ENCODE measurements at regions of chr5 and their contacts with region 1.

Region 1: DNA sequence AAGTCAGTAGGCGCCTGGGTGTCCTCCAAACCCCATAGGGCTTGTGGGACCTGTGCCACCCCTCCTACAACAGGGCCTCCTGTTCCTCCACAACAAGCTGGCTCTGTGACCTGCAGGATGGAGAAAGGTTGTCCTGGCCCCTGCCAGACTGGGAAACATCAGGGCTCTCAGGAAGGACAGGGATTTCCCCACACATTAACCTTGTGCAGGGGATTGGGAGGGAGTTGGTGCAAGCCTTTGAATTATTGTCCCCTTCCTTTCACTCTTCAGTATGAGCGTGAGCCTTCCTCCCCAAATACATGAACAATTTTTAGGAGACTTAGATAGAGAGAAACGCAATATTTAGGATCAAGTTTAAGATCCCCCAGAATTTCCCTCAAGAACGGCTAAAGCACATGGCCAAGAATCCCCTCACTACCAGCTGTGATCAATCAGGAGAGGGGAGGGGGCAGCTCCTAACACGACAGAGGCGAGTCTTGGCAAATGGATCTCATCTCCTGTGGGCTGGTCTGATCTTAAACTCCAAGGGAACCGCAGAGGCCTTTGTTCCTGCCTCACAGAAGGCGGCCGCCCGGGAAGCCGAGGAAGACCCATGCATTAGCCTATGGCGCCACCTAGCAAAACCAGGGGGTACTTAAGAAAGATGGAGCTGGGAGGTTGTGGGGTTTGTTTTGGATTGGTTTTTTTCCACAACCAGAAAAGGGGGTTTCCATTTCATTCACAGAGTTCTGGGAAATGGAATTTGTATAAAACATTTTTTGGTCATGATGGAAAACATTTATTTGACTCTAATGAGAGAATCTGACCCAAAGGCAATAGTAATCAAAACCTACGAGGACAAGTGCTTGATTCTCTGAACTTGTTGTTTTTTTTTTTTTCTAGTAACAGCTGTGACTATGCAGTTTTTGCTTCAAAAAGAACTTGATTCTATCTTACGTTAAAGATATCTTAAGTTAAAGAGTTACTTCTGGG is 36.1 kb upstream of the OSMR start:
- DNase-seq: peak; percentile 93
- H3K4me3 ChIP-seq: no peak overlapping the region
- H3K27ac ChIP-seq: no peak overlapping the region
- H3K4me1 ChIP-seq: peaks cover 42% of the 10 kb centered on the region
- H3K27me3 ChIP-seq: no peaks in the 10 kb centered on the region

Region 2: DNA sequence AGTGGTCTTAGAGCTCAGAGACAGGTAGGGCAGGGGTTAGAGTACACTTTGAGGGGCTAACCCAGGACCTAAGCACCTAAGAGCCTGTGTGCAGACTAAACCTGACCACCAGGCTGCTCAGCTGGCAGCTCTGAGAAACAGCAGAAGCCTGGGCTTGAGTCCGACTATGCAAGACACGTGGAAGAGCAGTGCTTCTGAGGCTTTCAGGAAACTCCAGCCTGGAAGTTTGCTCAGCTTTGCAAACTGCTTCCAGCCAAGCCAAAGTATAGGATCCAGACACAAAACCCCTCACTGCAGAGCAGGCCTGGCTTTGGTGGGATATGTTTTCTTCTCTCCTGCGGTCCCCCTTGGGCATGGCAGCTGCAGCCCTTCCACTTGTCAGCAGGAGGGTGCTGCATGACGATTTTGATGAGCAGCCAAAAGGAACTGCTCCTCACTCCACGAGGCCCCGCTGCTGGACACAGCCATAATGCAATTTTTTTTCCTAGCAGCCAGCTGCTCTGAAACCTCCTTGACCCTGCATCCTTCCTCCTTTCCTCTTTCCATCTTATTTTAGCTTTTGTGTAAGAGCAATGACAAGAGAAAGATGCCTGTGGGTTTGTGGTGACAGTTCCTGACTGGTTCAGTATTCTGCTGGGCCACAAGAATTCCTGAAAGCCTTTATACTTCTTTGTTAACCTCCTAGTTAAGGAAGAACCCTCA is 376.4 kb before region 1 on chr5:
- in situ Hi-C with region 1: loop called (anchors 5 kb)
- DNase-seq: peak; percentile 71
- H3K4me3 ChIP-seq: no peak overlapping the region
- H3K27ac ChIP-seq: no peak overlapping the region
- H3K4me1 ChIP-seq: peaks cover 20% of the 10 kb centered on the region
- H3K27me3 ChIP-seq: no peaks in the 10 kb centered on the region

Region 3: DNA sequence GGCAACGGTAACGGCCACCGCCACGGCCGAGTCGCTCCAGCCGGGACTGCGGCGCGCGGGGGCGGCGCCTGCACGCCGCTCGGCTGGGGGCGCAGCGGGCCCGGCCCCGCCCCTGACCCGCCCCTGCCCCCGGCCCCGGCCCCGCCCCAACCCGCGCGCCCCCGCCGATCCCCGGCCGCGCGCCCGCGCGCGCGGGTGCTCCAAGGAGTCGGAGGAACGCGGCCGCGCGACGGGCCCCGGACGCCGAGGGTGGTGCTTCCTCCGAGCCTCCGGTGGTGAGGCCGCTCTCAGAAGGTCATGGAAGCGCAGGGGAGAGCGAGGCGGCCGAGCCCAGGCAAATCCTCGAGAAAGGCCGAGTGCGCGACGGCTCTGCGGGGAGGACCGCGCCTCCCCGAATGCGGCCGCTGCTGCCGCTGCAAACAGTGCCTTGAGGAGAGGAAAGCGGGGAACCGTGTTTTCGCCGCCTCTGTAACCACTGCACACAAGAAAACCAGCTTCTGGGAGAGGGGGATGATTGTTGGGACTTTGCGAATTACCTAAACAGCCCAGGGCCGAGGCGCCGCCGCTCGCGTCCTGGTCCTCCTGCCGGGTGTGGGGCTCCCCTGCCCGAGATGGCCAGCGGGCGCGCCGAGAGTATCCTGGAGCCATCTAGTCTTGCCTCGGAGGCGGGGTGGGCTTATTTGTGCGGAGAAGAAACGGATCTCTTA is 252.9 kb before region 1 on chr5 and contains the start of gene LIFR:
- in situ Hi-C with region 1: loop called (anchors 10 kb)
- DNase-seq: peak; percentile 87
- H3K4me3 ChIP-seq: peak within 1 kb of the TSS; percentile 87
- H3K27ac ChIP-seq: peak within 1 kb of the TSS; percentile 56
- H3K4me1 ChIP-seq: peaks cover 13% of the 10 kb centered on the region; the same call in 1 of the 2 replicates
- H3K27me3 ChIP-seq: no peaks in the 10 kb centered on the region
- total RNA-seq, gene LIFR: 6.9 and 16.4 TPM in 2 replicates

Measured in GM23248 (cell line).